Transverse colon (tissue), 4 donors: ENCODE measurements at regions of chr18 and their contacts with region 1.

Region 1: GRCh38 chr18:60809937-60810336 is 437.4 kb upstream of the MC4R start:
- DNase-seq: no peak
- H3K4me3 ChIP-seq: no peak overlapping the region
- H3K27ac ChIP-seq: no peak overlapping the region
- H3K4me1 ChIP-seq: no peaks in the 10 kb centered on the region
- H3K27me3 ChIP-seq: no peaks in the 10 kb centered on the region
- CTCF ChIP-seq: no peak
- EP300 ChIP-seq: no peak
- POLR2A ChIP-seq: no peak

Region 2: DNA sequence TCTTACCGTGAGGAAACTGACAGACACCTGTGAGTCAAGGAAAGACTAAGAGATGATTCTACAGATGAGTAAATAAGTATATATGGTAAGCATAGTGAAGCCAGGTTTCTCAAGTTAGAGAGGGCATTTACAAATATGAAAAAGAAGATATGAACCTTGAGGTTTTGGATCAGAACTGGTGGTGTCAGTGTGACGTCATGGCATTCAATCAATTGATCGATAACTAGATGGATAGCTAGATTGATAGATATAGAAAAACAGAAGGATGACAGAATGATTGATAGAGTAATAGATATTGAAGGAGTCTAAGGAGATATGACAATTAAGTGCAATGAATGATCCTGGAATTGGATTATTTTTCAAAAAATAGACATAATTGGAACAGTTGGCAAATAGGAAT is 87.2 kb before region 1 on chr18:
- in situ Hi-C with region 1: loop called in 1 of 4 experiments (anchors 25 kb)
- intact Hi-C with region 1: no loop called
- DNase-seq: no peak
- H3K4me3 ChIP-seq: no peak overlapping the region
- H3K27ac ChIP-seq: no peak overlapping the region
- H3K4me1 ChIP-seq: no peaks in the 10 kb centered on the region
- H3K27me3 ChIP-seq: no peaks in the 10 kb centered on the region
- CTCF ChIP-seq: no peak
- EP300 ChIP-seq: no peak
- POLR2A ChIP-seq: no peak

Region 3: DNA sequence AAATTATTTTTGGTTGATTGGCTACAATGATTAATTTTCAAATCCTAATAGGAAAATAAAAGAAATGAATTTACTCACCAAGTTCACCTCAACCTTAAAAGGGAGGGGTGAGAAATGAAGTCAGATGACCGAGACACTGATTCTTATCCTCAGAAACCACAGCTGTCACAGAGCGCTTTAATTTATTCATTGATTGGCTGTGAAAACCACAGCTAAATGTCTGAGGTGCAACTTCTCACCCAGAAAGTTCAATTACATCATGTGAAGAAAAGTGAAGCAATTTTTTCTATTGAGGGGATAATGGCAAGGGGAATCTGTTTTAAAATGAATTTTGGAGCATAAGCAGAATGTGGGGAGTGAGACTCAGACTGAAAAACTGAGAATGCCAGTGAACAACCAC is 954.4 kb after region 1 on chr18:
- in situ Hi-C with region 1: no loop called
- intact Hi-C with region 1: loop called (anchors 5 kb)
- DNase-seq: no peak
- H3K4me3 ChIP-seq: no peak overlapping the region
- H3K27ac ChIP-seq: no peak overlapping the region
- H3K4me1 ChIP-seq: no peaks in the 10 kb centered on the region
- H3K27me3 ChIP-seq: no peaks in the 10 kb centered on the region
- CTCF ChIP-seq: no peak
- EP300 ChIP-seq: no peak
- POLR2A ChIP-seq: no peak